Activated CD4-positive, alpha-beta memory T cell treated with anti-CD3 and anti-CD28 coated beads for 36 hours (primary cell): ENCODE measurements at regions of chr2 and their contacts with region 1.

Region 1: DNA sequence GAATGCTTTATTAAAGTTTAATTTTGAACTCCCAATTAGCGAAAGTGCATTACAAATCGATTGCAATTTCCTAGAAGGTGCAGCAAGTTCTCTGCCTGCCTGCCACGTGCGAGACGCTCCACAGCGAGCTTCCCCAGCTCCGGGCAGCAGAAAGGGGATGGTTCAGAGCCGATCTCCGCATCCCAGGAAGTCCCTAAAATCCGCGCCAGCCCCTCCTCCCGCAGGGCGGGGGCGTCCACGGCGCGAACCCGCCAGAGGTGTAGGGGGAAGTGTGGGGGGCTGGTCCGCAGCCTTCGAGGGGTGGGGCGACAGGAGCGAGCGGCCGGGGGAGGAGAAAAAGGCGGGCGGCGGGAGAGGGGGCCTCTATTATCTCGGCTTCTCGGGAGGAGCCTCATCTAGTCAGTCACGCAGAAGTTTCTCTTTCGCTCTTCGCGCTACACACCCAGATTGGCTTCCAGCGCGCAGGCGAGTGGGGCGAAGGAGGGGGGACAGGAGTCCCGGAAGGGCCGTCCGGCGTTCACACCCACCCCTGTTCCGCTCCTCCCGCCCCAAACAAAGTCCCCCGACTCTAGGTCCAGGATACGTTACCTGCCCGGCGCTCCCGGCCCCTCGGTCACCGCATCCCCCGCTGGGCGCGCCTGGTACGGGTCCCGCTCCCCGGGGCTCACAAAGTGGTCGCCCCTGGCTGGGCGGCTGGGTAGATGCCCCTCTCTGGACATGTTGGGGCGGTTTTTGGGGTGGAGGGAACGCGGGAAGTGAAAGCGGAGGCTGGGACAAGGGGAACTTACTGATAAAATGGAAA is 9.1 kb upstream of the NR4A2 start:
- DNase-seq: peak; percentile 93
- H3K4me3 Mint-ChIP-seq: peak overlapping the region; percentile 94
- H3K27ac Mint-ChIP-seq: peak overlapping the region; percentile 99
- H3K4me1 Mint-ChIP-seq: peaks cover 47% of the 10 kb centered on the region
- H3K27me3 Mint-ChIP-seq: no peaks in the 10 kb centered on the region

Region 2: GRCh38 chr2:155930312-155930711 is 411.3 kb before region 1 on chr2:
- CTCF ChIA-PET with region 1: no interaction called
- POLR2A ChIA-PET with region 1: no interaction called
- intact Hi-C with region 1: no loop called
- DNase-seq: no peak
- H3K4me3 Mint-ChIP-seq: no peak overlapping the region
- H3K27ac Mint-ChIP-seq: no peak overlapping the region
- H3K4me1 Mint-ChIP-seq: no peaks in the 10 kb centered on the region
- H3K27me3 Mint-ChIP-seq: no peaks in the 10 kb centered on the region

Region 3: GRCh38 chr2:156057647-156058046 is 284.0 kb before region 1 on chr2:
- CTCF ChIA-PET with region 1: no interaction called
- POLR2A ChIA-PET with region 1: no interaction called
- intact Hi-C with region 1: no loop called
- DNase-seq: no peak
- H3K4me3 Mint-ChIP-seq: no peak overlapping the region
- H3K27ac Mint-ChIP-seq: no peak overlapping the region
- H3K4me1 Mint-ChIP-seq: no peaks in the 10 kb centered on the region
- H3K27me3 Mint-ChIP-seq: no peaks in the 10 kb centered on the region

Region 4: GRCh38 chr2:156385242-156385641 is 43.6 kb after region 1 on chr2:
- CTCF ChIA-PET with region 1: no interaction called
- POLR2A ChIA-PET with region 1: interaction called, 7 read pairs
- intact Hi-C with region 1: loop called (anchors 1 kb)
- DNase-seq: peak; percentile 37
- H3K4me3 Mint-ChIP-seq: no peak overlapping the region
- H3K27ac Mint-ChIP-seq: peak overlapping the region; percentile 46
- H3K4me1 Mint-ChIP-seq: peaks cover 21% of the 10 kb centered on the region
- H3K27me3 Mint-ChIP-seq: peaks cover 6% of the 10 kb centered on the region

Region 5: GRCh38 chr2:156435715-156436496 is 94.3 kb after region 1 on chr2 and contains the start of gene GPD2:
- CTCF ChIA-PET with region 1: interaction called, 7 read pairs
- POLR2A ChIA-PET with region 1: interaction called, 10 read pairs
- intact Hi-C with region 1: loop called (anchors 1 kb)
- DNase-seq: peak; percentile 67
- H3K4me3 Mint-ChIP-seq: peak within 1 kb of the TSS; percentile 89
- H3K27ac Mint-ChIP-seq: peak within 1 kb of the TSS; percentile 82
- H3K4me1 Mint-ChIP-seq: peaks cover 28% of the 10 kb centered on the region
- H3K27me3 Mint-ChIP-seq: no peaks in the 10 kb centered on the region
- total RNA-seq, gene GPD2: 27.3 to 28.6 TPM

Region 6: GRCh38 chr2:156490466-156490840 is 148.8 kb after region 1 on chr2:
- CTCF ChIA-PET with region 1: no interaction called
- POLR2A ChIA-PET with region 1: no interaction called
- intact Hi-C with region 1: loop called (anchors 1 kb)
- DNase-seq: no peak
- H3K4me3 Mint-ChIP-seq: no peak overlapping the region
- H3K27ac Mint-ChIP-seq: no peak overlapping the region
- H3K4me1 Mint-ChIP-seq: peaks cover 34% of the 10 kb centered on the region
- H3K27me3 Mint-ChIP-seq: no peaks in the 10 kb centered on the region

Region 7: GRCh38 chr2:157261199-157261783 is 919.6 kb after region 1 on chr2:
- CTCF ChIA-PET with region 1: no interaction called
- POLR2A ChIA-PET with region 1: no interaction called
- intact Hi-C with region 1: loop called (anchors 2 kb)
- DNase-seq: peak; percentile 81
- H3K4me3 Mint-ChIP-seq: no peak overlapping the region
- H3K27ac Mint-ChIP-seq: peak overlapping the region; percentile 18
- H3K4me1 Mint-ChIP-seq: peaks cover 19% of the 10 kb centered on the region
- H3K27me3 Mint-ChIP-seq: peaks cover 5% of the 10 kb centered on the region